Dendritic cell treated with granulocyte-macrophage colony-stimulating factor and Interleukin-4, amounts not matched to agents 40 ng/mL and 50 ng/mL, for 4 days (primary cell): ENCODE measurements at regions of chr5 and their contacts with region 1.

Region 1: GRCh38 chr5:59188419-59189225 is 605.7 kb downstream of the RAB3C start:
- H3K4me3 Mint-ChIP-seq: peak overlapping the region; percentile 28
- H3K27ac Mint-ChIP-seq: no peak overlapping the region
- H3K4me1 Mint-ChIP-seq: no peaks in the 10 kb centered on the region
- H3K27me3 Mint-ChIP-seq: peaks cover 2% of the 10 kb centered on the region

Region 2: DNA sequence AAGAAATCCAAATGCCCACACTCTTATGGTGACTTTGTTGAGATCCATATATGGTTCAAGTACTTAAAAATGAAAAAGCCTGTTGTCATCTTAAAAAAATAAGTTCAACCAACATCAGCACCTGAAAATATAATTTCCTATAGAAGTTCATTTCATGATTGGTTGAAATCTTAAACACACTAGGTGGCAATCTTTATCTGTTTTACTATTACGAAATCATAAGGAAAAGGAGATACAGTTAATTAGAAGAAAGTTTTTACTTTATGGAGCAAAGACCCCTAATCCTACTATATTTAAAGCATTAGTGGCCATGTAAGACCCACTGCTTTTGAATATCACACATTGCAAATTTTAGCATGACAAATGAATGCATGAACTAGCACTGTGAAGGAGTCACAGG is 10.2 kb after region 1 on chr5:
- intact Hi-C with region 1: no loop called
- H3K4me3 Mint-ChIP-seq: no peak overlapping the region
- H3K27ac Mint-ChIP-seq: no peak overlapping the region
- H3K4me1 Mint-ChIP-seq: peaks cover 8% of the 10 kb centered on the region
- H3K27me3 Mint-ChIP-seq: no peaks in the 10 kb centered on the region

Region 3: GRCh38 chr5:59367791-59368394 is 179.3 kb after region 1 on chr5:
- intact Hi-C with region 1: loop called (anchors 1 kb)
- H3K4me3 Mint-ChIP-seq: no peak overlapping the region
- H3K27ac Mint-ChIP-seq: no peak overlapping the region
- H3K4me1 Mint-ChIP-seq: no peaks in the 10 kb centered on the region
- H3K27me3 Mint-ChIP-seq: no peaks in the 10 kb centered on the region

Region 4: DNA sequence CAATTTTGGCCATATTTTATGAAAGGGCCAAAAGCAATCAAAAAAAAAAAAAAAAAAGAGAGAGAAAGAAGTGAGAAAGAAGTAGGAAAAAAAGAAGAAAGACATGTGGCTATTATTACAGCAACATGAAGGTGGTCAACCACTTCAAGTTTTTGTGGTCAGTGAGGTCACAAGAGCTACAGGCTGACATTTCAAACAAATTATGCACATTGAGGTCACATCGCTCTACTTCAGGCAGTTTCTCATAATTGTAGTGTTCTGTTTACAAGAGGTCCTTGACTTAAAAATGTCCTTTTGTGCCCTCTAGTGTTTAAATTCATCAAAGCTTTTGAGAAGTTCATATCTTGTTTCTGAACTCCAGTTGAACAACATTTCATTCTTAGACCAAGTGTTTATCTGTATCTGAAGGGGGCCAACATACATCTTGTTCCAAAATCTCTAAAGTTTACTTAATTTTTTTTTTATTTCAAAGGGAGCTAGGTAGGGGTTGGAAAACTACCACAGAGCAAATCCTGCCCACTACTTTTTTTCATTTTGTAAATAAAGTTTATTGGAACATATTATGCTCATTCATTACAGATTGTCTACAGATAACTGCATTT is 191.8 kb after region 1 on chr5:
- intact Hi-C with region 1: loop called (anchors 1 kb)
- H3K4me3 Mint-ChIP-seq: no peak overlapping the region
- H3K27ac Mint-ChIP-seq: no peak overlapping the region
- H3K4me1 Mint-ChIP-seq: no peaks in the 10 kb centered on the region
- H3K27me3 Mint-ChIP-seq: no peaks in the 10 kb centered on the region

Region 5: DNA sequence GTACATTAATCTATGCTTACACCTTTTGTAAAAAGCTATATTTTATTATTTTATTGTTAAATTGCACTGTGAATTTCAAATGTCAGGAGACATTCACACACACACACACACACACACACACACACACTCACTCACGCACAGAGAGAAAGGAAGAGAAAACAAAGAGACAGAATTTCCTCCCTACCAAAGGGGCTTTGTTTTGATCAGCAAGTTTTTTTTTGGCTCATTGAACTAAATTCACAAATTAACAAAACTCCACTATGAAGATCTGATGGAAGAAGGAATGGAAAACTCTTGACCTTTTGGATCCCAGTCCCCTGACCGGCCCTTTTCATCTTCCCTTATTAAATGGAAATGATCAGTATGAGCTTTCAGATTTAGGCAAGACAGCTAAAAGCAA is 543.7 kb after region 1 on chr5:
- intact Hi-C with region 1: no loop called
- H3K4me3 Mint-ChIP-seq: no peak overlapping the region
- H3K27ac Mint-ChIP-seq: no peak overlapping the region
- H3K4me1 Mint-ChIP-seq: no peaks in the 10 kb centered on the region
- H3K27me3 Mint-ChIP-seq: no peaks in the 10 kb centered on the region